HEK293T (cell line): ENCODE measurements at regions of chr13 and their contacts with region 1.

Region 1: DNA sequence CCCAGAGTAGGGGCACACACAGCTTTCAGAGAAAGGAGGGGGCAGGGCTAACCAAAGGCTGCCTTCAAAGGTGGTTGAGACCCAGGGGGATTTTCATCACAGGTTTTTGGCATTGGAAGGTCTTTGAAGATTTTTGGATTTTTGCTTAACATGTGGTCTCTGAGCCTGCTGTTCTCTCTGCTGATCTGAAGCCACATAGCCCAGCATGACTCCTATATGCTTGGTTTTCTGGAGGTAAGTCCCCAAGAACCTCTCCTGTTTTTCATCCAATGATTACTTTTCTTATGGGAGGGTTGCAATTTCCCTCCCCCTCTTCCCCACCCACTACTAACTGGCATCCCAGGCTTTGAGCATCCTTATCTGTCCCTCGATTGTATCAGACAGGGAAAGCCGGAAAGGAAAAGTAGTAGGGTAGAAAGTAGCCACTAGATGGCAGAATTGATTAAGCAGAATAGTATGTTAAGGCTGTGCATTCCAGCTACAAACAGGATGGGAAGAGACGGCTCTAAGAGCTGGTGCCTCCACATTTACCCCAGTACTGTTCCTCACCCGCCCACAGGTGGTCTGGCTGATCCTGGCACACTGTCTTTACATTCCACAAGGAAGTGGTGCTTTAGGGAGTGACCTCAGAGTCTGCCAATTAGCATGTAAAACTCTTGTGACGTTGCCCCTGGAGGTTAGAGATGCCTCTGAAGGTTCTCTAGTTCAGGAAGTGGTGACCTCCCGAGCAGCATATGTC is 218.9 kb upstream of the EDNRB start:
- DNase-seq: peak; percentile 83

Region 2: GRCh38 chr13:78036841-78037240 is 100.7 kb before region 1 on chr13:
- CTCF ChIA-PET with region 1: interaction called, 10 read pairs
- POLR2A ChIA-PET with region 1: no interaction called
- DNase-seq: no peak

Region 3: GRCh38 chr13:78241278-78241919 is 103.8 kb after region 1 on chr13:
- CTCF ChIA-PET with region 1: interaction called, 16 read pairs
- POLR2A ChIA-PET with region 1: no interaction called
- DNase-seq: peak; percentile 85

Region 4: DNA sequence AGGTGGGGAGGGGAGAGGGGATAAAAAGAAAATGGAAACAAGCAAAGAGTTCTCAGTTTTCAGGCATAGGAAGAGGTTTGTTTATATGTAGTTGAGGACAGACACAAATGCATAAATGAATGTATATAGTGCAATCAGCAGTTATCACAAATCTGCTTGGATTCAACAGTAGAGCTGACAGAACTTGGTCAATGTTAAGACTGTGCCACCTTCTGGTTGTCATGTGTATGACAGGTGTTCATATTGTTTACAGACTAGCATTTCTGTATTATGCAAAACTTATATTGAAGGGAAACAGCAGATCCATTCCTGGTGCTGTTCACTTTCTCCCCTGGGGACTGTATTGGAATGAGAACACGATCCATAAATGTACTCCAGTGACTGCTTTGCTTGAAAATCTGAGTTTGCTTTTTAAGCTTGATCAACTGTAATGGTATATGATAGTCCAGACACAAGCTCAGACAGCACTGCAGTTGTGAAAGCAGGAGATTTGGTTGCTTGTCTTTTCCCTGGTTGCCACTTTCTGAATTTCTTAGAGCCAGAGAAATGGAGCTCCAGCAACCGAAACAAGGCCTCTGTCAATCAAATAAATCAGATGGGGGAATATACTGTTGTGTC is 840.9 kb after region 1 on chr13:
- CTCF ChIA-PET with region 1: interaction called, 15 read pairs
- POLR2A ChIA-PET with region 1: interaction called, 3 read pairs
- DNase-seq: peak; percentile 81